Endothelial cell of umbilical vein (primary cell): ENCODE measurements at regions of chr9 and their contacts with region 1.

Region 1: DNA sequence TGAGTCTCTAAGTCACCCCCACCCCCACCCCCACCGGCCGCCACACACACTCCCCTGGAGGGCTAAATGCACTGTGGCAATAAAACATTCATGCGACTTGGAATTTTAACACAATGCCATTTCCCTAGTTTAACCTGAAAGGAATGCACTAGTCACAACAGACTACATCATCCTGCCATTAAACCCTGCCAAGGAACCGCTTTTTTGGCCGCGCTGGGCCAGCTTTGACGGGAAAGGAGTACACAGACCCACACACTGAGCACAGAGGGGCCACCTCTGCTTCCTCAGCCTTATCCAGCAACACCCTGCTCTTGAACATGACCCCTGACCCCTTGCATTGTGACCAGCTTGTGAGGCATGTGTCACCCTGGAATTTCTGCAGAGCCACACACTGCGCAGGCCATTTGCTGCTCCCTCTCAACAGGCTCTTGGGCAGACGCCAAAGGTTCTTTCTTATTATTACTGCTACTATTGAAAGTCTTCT is 165.3 kb downstream of the BNC2 start:
- DNase-seq: peak; percentile 99
- H3K4me3 ChIP-seq: peak overlapping the region in 2 of 3 experiments; percentile 57 to 97
- H3K27ac ChIP-seq: peak overlapping the region; percentile 99
- H3K4me1 ChIP-seq: peaks cover 51% of the 10 kb centered on the region
- H3K27me3 ChIP-seq: no peaks in the 10 kb centered on the region
- CTCF ChIP-seq: no peak
- POLR2A ChIP-seq: peak; percentile 44

Region 2: GRCh38 chr9:16335788-16336580 is 369.2 kb before region 1 on chr9:
- CTCF ChIA-PET with region 1: no interaction called
- POLR2A ChIA-PET with region 1: no interaction called
- dilution Hi-C with region 1: no loop called
- intact Hi-C with region 1: loop called (anchors 1 kb)
- DNase-seq: peak; percentile 82
- H3K4me3 ChIP-seq: no peak overlapping the region
- H3K27ac ChIP-seq: peak overlapping the region; percentile 81
- H3K4me1 ChIP-seq: peaks cover 25% of the 10 kb centered on the region
- H3K27me3 ChIP-seq: no peaks in the 10 kb centered on the region
- CTCF ChIP-seq: no peak
- POLR2A ChIP-seq: no peak

Region 3: DNA sequence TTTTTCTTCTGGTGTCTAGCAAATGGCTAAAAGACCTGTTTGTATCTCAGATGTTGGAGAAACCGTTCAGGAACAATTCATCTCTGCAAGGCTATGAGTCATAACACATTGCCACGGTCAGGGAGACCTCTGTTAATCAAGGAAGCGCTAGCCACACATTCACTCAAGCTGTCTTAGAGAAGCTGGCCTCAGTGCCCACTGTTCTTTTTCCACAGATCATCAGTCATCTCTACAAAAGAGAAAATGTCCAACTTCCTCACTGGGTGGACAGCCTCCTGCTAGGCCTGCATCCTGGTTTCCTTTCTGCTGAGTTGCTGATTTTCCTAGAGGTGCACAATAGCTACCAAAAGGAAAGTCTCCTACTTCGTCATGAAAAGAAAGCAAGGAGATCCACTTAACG is 195.2 kb before region 1 on chr9:
- CTCF ChIA-PET with region 1: no interaction called
- POLR2A ChIA-PET with region 1: no interaction called
- dilution Hi-C with region 1: no loop called
- intact Hi-C with region 1: loop called (anchors 1 kb)
- DNase-seq: peak; percentile 86
- H3K4me3 ChIP-seq: peak overlapping the region in 2 of 3 experiments; percentile 12 to 57
- H3K27ac ChIP-seq: peak overlapping the region; percentile 85
- H3K4me1 ChIP-seq: peaks cover 33% of the 10 kb centered on the region
- H3K27me3 ChIP-seq: no peaks in the 10 kb centered on the region
- CTCF ChIP-seq: no peak
- POLR2A ChIP-seq: no peak

Region 4: GRCh38 chr9:16689352-16689938 is 15.7 kb before region 1 on chr9:
- CTCF ChIA-PET with region 1: interaction called, 7 read pairs
- POLR2A ChIA-PET with region 1: interaction called, 4 read pairs
- dilution Hi-C with region 1: no loop called
- intact Hi-C with region 1: loop called (anchors 1 kb)
- DNase-seq: peak; percentile 83
- H3K4me3 ChIP-seq: peak overlapping the region in 1 of 3 experiments; percentile 7
- H3K27ac ChIP-seq: peak overlapping the region; percentile 42
- H3K4me1 ChIP-seq: peaks cover 33% of the 10 kb centered on the region
- H3K27me3 ChIP-seq: no peaks in the 10 kb centered on the region
- CTCF ChIP-seq: no peak
- POLR2A ChIP-seq: no peak

Region 5: DNA sequence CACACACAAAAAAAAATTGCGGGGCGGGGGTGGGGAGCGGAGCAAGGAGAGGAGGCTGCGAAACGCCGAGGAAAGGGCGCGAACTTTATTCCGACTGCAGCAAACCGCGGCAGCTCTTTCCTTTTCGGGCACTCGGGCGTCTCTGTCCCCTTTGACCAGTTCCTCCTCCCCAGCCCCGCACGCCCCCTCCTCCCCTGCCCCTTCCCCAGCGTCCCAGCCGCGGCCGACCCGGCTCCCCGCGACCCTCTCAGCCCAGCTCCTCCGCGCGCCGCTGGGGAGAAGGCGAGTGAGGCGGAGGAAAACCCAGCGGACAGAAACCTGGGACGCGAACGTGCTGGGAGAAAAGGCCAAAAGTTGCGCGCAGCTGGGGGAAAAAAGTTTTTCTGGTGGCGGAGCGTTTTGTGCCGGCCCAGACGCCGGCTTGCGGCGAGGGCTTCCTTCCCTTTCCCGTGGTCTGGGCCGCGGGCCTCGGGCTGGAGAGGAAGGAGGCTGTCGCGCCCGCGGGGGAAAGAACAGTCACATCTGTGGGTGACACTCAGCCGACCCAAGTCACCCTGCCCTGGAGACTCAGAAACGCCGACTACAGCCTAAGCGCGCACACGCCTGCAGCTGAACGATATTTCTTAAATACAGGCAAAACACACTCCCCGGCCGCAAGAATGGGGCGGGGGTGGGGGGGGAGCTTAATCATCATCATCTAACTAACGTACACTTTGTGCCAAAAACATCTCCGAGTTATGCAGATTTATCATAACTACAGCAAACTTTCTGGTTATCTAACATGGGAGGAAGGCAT is 166.4 kb after region 1 on chr9:
- CTCF ChIA-PET with region 1: no interaction called
- POLR2A ChIA-PET with region 1: no interaction called
- dilution Hi-C with region 1: no loop called
- intact Hi-C with region 1: loop called (anchors 1 kb)
- DNase-seq: peak; percentile 59
- H3K4me3 ChIP-seq: peak overlapping the region; percentile 81 to 98 (median 88)
- H3K27ac ChIP-seq: peak overlapping the region; percentile 17
- H3K4me1 ChIP-seq: peaks cover 14% of the 10 kb centered on the region
- H3K27me3 ChIP-seq: peaks cover 2 to 3% of the 10 kb centered on the region in 2 experiments
- CTCF ChIP-seq: no peak
- POLR2A ChIP-seq: no peak